ENCODE measurements at regions of chr9 and their contacts with region 1.

Region 1: GRCh38 chr9:124771021-124771866 is at the start of gene NR6A1:
- DNase-seq: peak; percentile 92
- ATAC-seq: peak; percentile 88
- H3K4me3 ChIP-seq: peak within 1 kb of the TSS; percentile 97
- H3K27ac ChIP-seq: peak within 1 kb of the TSS; percentile 86
- H3K4me1 ChIP-seq: peaks cover 21% of the 10 kb centered on the region
- H3K27me3 ChIP-seq: no peaks in the 10 kb centered on the region
- CTCF ChIP-seq: peak in 2 of 3 experiments; percentile 19 to 22; a peak in 3 of 6 replicates
- EP300 ChIP-seq: no peak
- POLR2A ChIP-seq: peak; percentile 64
- RAD21 ChIP-seq: no peak
- polyA plus RNA-seq, gene NR6A1: 1.2 to 2.5 TPM

Region 2: DNA sequence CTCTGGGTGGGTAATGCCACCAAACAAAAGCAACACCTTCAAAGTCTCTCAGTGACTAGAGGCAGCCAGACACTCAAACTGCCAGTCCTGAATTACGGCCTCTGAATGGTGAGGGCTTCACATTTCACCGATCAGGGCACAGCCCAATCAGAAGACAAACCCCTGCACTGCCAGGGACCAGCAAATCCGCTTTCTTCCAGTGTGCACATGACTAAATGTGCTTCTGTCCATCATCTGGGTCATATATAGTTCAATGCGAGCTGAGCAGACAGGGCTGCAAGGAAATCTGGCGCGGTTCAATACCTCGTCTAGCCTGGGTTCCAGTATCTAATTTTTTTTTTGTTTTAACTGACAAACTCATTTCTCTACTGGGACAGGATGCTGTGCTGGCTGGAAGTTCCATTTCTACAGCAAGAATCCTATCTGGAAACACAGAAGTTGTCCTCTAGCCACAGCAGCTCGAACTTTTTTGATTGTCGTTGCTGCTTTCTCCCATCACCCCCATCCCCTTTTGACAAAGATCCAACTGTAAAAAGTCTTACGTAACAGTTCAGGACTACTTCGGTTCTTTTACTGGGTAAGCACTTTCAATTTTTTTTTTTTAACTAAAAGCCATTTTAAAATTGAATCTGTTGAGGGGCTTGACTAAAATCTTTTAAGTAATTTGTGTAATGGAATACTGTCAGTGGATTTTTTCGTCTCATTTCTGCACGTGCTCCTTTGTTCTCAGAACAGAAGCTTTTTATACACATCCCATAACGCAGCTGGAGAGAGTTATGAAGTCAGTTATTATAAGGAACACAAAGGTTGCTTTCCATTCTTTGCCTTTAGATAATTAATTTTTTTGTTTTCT is 112.9 kb before region 1 on chr9:
- CTCF ChIA-PET with region 1: interaction called, 9 read pairs
- POLR2A ChIA-PET with region 1: interaction called, 12 read pairs
- RAD21 ChIA-PET with region 1: interaction called, 12 read pairs
- SMC1A ChIA-PET with region 1: interaction called, 8 read pairs
- in situ Hi-C with region 1: no loop called
- intact Hi-C with region 1: no loop called
- DNase-seq: peak; percentile 93
- ATAC-seq: peak; percentile 91
- H3K4me3 ChIP-seq: peak overlapping the region; percentile 75
- H3K27ac ChIP-seq: peak overlapping the region; percentile 96
- H3K4me1 ChIP-seq: 0 out of 2 replicates have a peak, but pooled peaks cover 3% of the 10 kb centered on the region
- H3K27me3 ChIP-seq: no peaks in the 10 kb centered on the region
- CTCF ChIP-seq: no peak
- EP300 ChIP-seq: no peak
- POLR2A ChIP-seq: peak; percentile 95
- RAD21 ChIP-seq: no peak

Region 3: GRCh38 chr9:124818431-124819281 is 47.4 kb after region 1 on chr9:
- CTCF ChIA-PET with region 1: interaction called, 10 read pairs
- POLR2A ChIA-PET with region 1: interaction called, 4 read pairs
- RAD21 ChIA-PET with region 1: interaction called, 3 read pairs
- SMC1A ChIA-PET with region 1: interaction called, 7 read pairs
- in situ Hi-C with region 1: no loop called
- intact Hi-C with region 1: no loop called
- DNase-seq: no peak
- ATAC-seq: peak; percentile 75
- H3K4me3 ChIP-seq: no peak overlapping the region
- H3K27ac ChIP-seq: 0 out of 2 replicates have a peak overlapping the region, but pooled peaks have one; percentile 28
- H3K4me1 ChIP-seq: peaks cover 11% of the 10 kb centered on the region
- H3K27me3 ChIP-seq: no peaks in the 10 kb centered on the region
- CTCF ChIP-seq: no peak
- EP300 ChIP-seq: no peak
- POLR2A ChIP-seq: peak; percentile 52; the same call in 1 of the 2 replicates
- RAD21 ChIP-seq: no peak

Region 4: DNA sequence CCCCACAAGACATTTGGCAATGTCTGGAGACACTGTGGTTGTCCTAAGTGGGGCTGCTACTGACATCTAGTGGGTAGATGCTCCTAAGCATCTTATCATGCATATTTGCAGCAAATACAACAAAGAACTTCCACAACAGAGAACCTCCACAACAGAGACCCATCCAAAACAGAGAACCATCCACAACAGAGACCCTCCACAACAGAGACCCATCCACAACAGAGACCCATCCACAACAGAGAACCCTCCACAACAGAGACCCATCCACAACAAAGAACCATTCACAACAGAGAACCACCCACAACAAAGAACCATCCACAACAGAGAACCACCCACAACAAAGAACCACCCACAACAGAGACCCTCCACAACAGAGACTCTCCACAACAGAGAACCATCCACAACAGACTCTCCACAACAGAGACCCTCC is 123.5 kb after region 1 on chr9:
- CTCF ChIA-PET with region 1: interaction called, 22 read pairs
- POLR2A ChIA-PET with region 1: interaction called, 5 read pairs
- RAD21 ChIA-PET with region 1: interaction called, 3 read pairs
- SMC1A ChIA-PET with region 1: interaction called, 4 read pairs
- in situ Hi-C with region 1: no loop called
- intact Hi-C with region 1: loop called (anchors 1 kb)
- DNase-seq: no peak
- ATAC-seq: peak; percentile 91
- H3K4me3 ChIP-seq: no peak overlapping the region
- H3K27ac ChIP-seq: no peak overlapping the region
- H3K4me1 ChIP-seq: no peaks in the 10 kb centered on the region
- H3K27me3 ChIP-seq: no peaks in the 10 kb centered on the region
- CTCF ChIP-seq: peak; percentile 57 to 71 (median 58); a peak in 5 of 6 replicates
- EP300 ChIP-seq: no peak
- POLR2A ChIP-seq: no peak
- RAD21 ChIP-seq: peak; percentile 78

Region 5: GRCh38 chr9:125374443-125375309 is 603.4 kb after region 1 on chr9:
- CTCF ChIA-PET with region 1: interaction called, 9 read pairs
- POLR2A ChIA-PET with region 1: no interaction called
- RAD21 ChIA-PET with region 1: no interaction called
- SMC1A ChIA-PET with region 1: no interaction called
- in situ Hi-C with region 1: loop called (anchors 5 kb)
- intact Hi-C with region 1: loop called (anchors 1 kb)
- DNase-seq: peak; percentile 16
- ATAC-seq: peak; percentile 98
- H3K4me3 ChIP-seq: no peak overlapping the region
- H3K27ac ChIP-seq: no peak overlapping the region
- H3K4me1 ChIP-seq: 0 out of 2 replicates have a peak, but pooled peaks cover 3% of the 10 kb centered on the region
- H3K27me3 ChIP-seq: peaks cover 0 to 2% of the 10 kb centered on the region in 2 experiments; a peak in 1 of 4 replicates
- CTCF ChIP-seq: peak; percentile 82 to 87 (median 83)
- EP300 ChIP-seq: no peak
- POLR2A ChIP-seq: no peak
- RAD21 ChIP-seq: peak; percentile 100